HCT116 (cell line): ENCODE measurements at regions of chr1 and their contacts with region 1.

Region 1: GRCh38 chr1:156054500-156055280 is at the start of gene LAMTOR2:
- DNase-seq: peak; percentile 94
- ATAC-seq: peak; percentile 78
- H3K4me3 ChIP-seq: peak within 1 kb of the TSS; percentile 89 to 95
- H3K27ac ChIP-seq: peak within 1 kb of the TSS; percentile 92
- H3K4me1 ChIP-seq: peaks cover 6 to 24% of the 10 kb centered on the region in 2 experiments; a peak in 3 of 4 replicates
- H3K27me3 ChIP-seq: no peaks in the 10 kb centered on the region
- CTCF ChIP-seq: no peak
- POLR2A ChIP-seq: peak; percentile 76
- RAD21 ChIP-seq: no peak
- total RNA-seq, gene LAMTOR2: 60.2 TPM

Region 2: GRCh38 chr1:155809088-155809487 is 245.6 kb before region 1 on chr1:
- CTCF ChIA-PET with region 1: no interaction called
- POLR2A ChIA-PET with region 1: no interaction called
- RAD21 ChIA-PET with region 1: no interaction called
- intact Hi-C with region 1: no loop called
- DNase-seq: no peak
- ATAC-seq: no peak
- H3K4me3 ChIP-seq: no peak overlapping the region
- H3K27ac ChIP-seq: no peak overlapping the region
- H3K4me1 ChIP-seq: no peaks in the 10 kb centered on the region
- H3K27me3 ChIP-seq: no peaks in the 10 kb centered on the region
- CTCF ChIP-seq: no peak
- POLR2A ChIP-seq: no peak
- RAD21 ChIP-seq: no peak

Region 3: GRCh38 chr1:155940531-155940992 is 114.1 kb before region 1 on chr1:
- CTCF ChIA-PET with region 1: no interaction called
- POLR2A ChIA-PET with region 1: no interaction called
- RAD21 ChIA-PET with region 1: no interaction called
- intact Hi-C with region 1: loop called (anchors 5 kb)
- DNase-seq: no peak
- ATAC-seq: peak; percentile 68
- H3K4me3 ChIP-seq: peak overlapping the region; percentile 24 to 40
- H3K27ac ChIP-seq: peak overlapping the region; percentile 96
- H3K4me1 ChIP-seq: peaks cover 49 to 67% of the 10 kb centered on the region in 2 experiments
- H3K27me3 ChIP-seq: no peaks in the 10 kb centered on the region
- CTCF ChIP-seq: no peak
- POLR2A ChIP-seq: peak; percentile 31
- RAD21 ChIP-seq: no peak

Region 4: DNA sequence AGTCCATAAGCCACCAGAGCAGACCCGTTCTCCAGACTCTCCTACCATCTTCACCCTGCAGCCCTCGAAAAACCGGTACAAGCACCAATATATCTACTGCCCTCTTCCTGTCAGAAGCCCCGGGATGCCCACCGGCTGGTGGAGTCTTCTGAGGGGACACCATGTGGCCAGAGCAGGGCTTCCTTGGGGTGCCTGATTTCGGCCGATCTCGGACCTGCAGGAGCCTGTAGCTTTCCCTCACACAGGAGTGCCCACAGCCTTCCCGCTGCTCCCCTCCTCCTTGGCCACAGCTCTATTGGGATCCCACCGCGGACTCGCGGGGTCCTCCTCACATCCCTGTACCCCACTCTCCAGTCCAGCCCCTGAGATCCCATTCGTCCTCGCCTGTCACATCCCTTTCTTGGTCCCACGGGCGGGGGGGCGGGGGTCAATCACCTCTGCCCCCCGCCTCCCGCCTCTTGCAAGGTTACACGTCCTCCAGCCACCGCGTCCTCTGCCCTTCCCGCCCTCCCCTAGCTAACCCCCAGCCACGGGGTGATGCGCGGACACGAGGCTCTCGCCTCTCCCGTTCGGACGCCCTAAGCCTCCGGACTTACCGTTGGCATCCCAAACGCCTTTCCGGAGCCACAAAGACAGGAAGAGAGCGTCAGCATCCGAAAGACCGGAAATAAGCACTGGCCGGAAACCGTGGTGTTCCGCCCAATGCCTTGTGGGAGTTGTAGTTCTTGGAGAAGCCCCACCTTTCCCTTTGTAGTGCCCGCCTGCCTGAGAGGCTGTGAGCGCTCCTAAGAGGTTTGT is 34.2 kb before region 1 on chr1 and contains the start of gene SSR2:
- CTCF ChIA-PET with region 1: interaction called, 4 read pairs
- POLR2A ChIA-PET with region 1: no interaction called
- RAD21 ChIA-PET with region 1: interaction called in 1 of 2 experiments, 4 read pairs
- intact Hi-C with region 1: loop called (anchors 2 kb)
- DNase-seq: peak; percentile 84
- ATAC-seq: peak; percentile 94
- H3K4me3 ChIP-seq: peak within 1 kb of the TSS; percentile 79
- H3K27ac ChIP-seq: peak within 1 kb of the TSS; percentile 48
- H3K4me1 ChIP-seq: peaks cover 4 to 11% of the 10 kb centered on the region in 2 experiments; a peak in 2 of 4 replicates
- H3K27me3 ChIP-seq: no peaks in the 10 kb centered on the region
- CTCF ChIP-seq: no peak
- POLR2A ChIP-seq: peak; percentile 62
- RAD21 ChIP-seq: no peak
- total RNA-seq, gene SSR2: 153 TPM